Heart left ventricle (tissue), 16 donors: ENCODE measurements at regions of chr17 and their contacts with region 1.

Region 1: GRCh38 chr17:5912991-5913531 is 157.1 kb upstream of the WSCD1 start:
- DNase-seq: no peak
- ATAC-seq: no peak
- H3K4me3 ChIP-seq: no peak overlapping the region
- H3K27ac ChIP-seq: no peak overlapping the region
- H3K4me1 ChIP-seq: no peaks in the 10 kb centered on the region
- H3K27me3 ChIP-seq: no peaks in the 10 kb centered on the region
- CTCF ChIP-seq: no peak
- POLR2A ChIP-seq: no peak

Region 2: GRCh38 chr17:5500589-5501391 is 412.3 kb before region 1 on chr17:
- intact Hi-C with region 1: no loop called
- DNase-seq: peak; percentile 70 to 84 (median 76)
- ATAC-seq: peak; percentile 44 to 94 (median 84)
- H3K4me3 ChIP-seq: peak overlapping the region; percentile 31 to 70 (median 57)
- H3K27ac ChIP-seq: peak overlapping the region in 5 of 12 donors; percentile 24 to 50 (median 33)
- H3K4me1 ChIP-seq: peaks cover 0 to 17% (median 5%) of the 10 kb centered on the region in 12 donors
- H3K27me3 ChIP-seq: peaks cover 0 to 9% (median 0%) of the 10 kb centered on the region in 9 donors
- CTCF ChIP-seq: no peak
- POLR2A ChIP-seq: no peak

Region 3: GRCh38 chr17:5854871-5855554 is 58.0 kb before region 1 on chr17:
- intact Hi-C with region 1: no loop called
- DNase-seq: no peak
- ATAC-seq: no peak
- H3K4me3 ChIP-seq: no peak overlapping the region
- H3K27ac ChIP-seq: no peak overlapping the region
- H3K4me1 ChIP-seq: no peaks in the 10 kb centered on the region
- H3K27me3 ChIP-seq: no peaks in the 10 kb centered on the region
- CTCF ChIP-seq: no peak
- POLR2A ChIP-seq: no peak

Region 4: DNA sequence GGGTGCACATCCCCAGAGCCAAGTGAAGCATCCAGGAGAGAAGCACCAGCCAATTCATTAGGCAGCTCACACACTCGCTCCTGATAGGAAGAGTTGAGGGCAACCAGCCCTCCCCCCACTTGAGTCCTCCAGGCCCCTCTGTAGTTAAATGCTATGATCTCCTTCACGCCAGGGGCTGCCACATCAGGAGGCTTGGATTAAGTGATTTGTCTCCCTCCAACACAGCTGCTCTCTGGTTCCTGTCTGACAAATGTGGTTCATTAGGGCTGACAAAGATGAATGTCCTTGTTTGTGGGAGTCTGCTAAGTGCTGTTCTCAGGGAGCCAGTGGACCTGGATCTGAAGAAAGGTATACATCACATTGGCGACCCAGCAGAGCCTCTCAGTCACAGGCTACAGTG is 62.6 kb after region 1 on chr17:
- intact Hi-C with region 1: loop called in 1 of 10 experiments (anchors 10 kb)
- DNase-seq: no peak
- ATAC-seq: no peak
- H3K4me3 ChIP-seq: no peak overlapping the region
- H3K27ac ChIP-seq: no peak overlapping the region
- H3K4me1 ChIP-seq: no peaks in the 10 kb centered on the region
- H3K27me3 ChIP-seq: peaks cover 0 to 11% (median 0%) of the 10 kb centered on the region in 9 donors
- CTCF ChIP-seq: no peak
- POLR2A ChIP-seq: no peak